Activated T-helper 1 cell treated with anti-CD3 and anti-CD28 coated beads, Interleukin-12 subunit alpha, Interleukin-12 subunit beta, Interleukin-2, Interleukin-4 antibody, amounts not matched to agents 30 ng/mL and 10 ng/mL and 1 ng/mL, durations not matched to agents 14 hours and 24 hours and 36 hours (primary cell): ENCODE measurements at regions of chr19 and their contacts with region 1.

Region 1: DNA sequence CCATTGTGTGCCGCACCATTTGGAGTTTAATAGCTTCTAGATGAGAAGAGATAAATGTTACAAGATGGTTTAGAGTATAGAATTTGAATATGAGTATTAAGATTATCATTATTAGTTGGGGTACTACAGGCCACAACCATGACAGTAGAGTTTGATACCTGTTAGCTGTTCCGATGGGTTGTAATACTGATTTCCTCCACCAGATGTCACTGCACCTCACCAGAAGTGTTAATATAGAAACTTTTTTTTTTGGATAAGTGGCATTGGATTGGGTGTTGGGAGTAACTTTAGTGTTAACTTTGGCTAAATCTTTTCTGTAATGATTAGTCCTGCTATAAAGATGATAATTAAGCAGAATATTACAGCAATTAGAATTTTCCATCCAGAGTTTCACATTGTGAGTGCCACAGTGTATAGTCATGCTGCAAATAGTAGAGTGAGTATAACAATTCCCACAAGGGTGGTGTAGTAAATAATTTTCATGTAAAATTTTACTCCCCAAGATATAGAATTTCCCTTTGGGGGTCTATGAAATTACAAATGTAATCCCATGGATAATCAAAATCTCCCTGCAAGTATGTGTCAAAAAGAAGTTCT is 56.3 kb downstream of the PSG3 start:
- DNase-seq: no peak
- H3K4me3 Mint-ChIP-seq: no peak overlapping the region
- H3K27ac Mint-ChIP-seq: no peak overlapping the region
- H3K4me1 Mint-ChIP-seq: no peaks in the 10 kb centered on the region
- H3K27me3 Mint-ChIP-seq: peaks cover 3% of the 10 kb centered on the region

Region 2: DNA sequence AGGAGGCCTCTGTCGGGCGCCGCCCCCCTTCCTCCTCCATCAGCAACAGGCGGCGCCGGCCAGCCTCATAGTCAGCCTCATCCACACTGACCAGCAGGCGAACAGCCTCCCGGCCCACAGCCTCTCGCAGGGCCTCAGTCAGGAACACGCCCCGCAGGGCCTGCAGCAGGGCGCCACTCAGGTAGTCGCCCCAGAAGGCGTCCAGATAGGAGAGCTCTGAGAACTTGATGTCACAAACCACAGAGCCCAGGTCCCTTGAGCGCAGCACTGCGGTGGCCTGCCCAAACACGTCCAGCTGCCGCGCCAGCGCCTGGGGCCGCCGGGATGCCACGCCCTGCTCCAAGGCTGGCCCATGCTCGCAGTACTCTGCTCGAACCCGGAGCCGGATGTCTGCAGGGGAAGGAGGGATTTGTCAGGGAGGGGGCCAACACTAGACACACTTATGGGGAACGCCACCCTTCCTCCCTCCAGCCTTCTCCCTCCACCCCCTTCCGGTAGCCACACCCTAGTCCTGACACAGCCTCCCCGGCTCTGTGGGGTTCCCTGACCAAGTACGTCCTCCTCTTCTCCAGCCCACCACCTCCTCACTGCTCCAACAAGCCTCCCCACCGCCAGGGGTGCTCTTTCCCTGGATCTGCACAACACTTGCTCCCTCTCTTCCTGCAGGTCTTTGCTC is 484.4 kb before region 1 on chr19:
- intact Hi-C with region 1: no loop called
- DNase-seq: peak; percentile 75
- H3K4me3 Mint-ChIP-seq: peak overlapping the region; percentile 77
- H3K27ac Mint-ChIP-seq: peak overlapping the region; percentile 92
- H3K4me1 Mint-ChIP-seq: peaks cover 83% of the 10 kb centered on the region
- H3K27me3 Mint-ChIP-seq: no peaks in the 10 kb centered on the region

Region 3: GRCh38 chr19:42480335-42481095 is 203.5 kb before region 1 on chr19:
- intact Hi-C with region 1: no loop called
- DNase-seq: no peak
- H3K4me3 Mint-ChIP-seq: no peak overlapping the region
- H3K27ac Mint-ChIP-seq: peak overlapping the region; percentile 45
- H3K4me1 Mint-ChIP-seq: peaks cover 9% of the 10 kb centered on the region
- H3K27me3 Mint-ChIP-seq: no peaks in the 10 kb centered on the region

Region 4: GRCh38 chr19:42497492-42498168 is 186.4 kb before region 1 on chr19:
- intact Hi-C with region 1: no loop called
- DNase-seq: no peak
- H3K4me3 Mint-ChIP-seq: no peak overlapping the region
- H3K27ac Mint-ChIP-seq: peak overlapping the region; percentile 49
- H3K4me1 Mint-ChIP-seq: peaks cover 23% of the 10 kb centered on the region
- H3K27me3 Mint-ChIP-seq: no peaks in the 10 kb centered on the region

Region 5: GRCh38 chr19:42762782-42763181 is 78.8 kb after region 1 on chr19:
- intact Hi-C with region 1: loop called (anchors 10 kb)
- DNase-seq: no peak
- H3K4me3 Mint-ChIP-seq: no peak overlapping the region
- H3K27ac Mint-ChIP-seq: no peak overlapping the region
- H3K4me1 Mint-ChIP-seq: no peaks in the 10 kb centered on the region
- H3K27me3 Mint-ChIP-seq: peaks cover 2% of the 10 kb centered on the region